Naive thymus-derived CD4-positive, alpha-beta T cell (primary cell): ENCODE measurements at regions of chr3 and their contacts with region 1.

Region 1: DNA sequence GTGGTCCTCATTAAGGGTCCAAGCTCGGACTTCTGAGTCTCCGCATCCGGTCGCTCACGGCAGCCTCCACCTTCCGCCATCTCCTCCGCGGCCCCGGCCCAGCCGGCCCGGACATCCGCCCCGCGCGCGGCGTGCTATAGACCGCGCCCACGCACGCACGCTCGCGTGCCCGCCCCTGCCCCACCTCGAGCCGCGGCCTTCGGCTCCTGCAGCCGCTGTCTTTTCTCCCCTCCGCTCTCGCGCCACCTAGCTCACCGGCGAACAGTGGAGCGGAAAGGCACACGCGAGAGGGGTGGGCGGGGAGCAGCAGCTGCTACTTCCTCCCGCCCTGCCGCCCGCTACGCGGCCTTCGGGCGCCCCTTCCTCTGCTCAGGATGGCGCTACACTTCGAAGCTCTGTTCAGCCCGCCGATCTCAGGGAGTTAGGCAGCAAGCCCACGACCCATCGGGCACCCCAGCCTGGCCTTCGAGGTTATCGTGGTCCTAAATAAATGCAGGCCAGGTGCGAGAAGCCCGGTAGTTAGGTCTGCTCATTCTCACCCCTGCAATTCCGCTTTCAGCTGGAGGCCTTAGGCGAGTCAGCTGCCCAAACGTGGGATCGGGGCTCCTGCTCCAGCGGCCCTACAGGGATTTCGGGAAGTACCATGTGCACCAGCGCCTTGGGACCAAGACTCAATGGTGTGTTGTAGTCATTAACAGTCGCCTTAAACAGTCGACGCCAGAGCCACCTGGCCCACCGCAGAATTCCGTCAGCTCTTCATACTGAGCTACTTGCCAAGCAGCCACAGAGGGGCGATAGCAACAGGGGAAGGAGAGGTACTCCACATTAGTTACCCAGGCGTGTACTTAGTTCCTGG is at the start of gene USP4:
- DNase-seq: peak; percentile 78 to 93 (median 91)
- ATAC-seq: peak; percentile 91
- H3K4me3 ChIP-seq: peak within 1 kb of the TSS; percentile 89
- H3K4me3 Mint-ChIP-seq: peak within 1 kb of the TSS; percentile 81 to 96 (median 86)
- H3K27ac ChIP-seq: peak within 1 kb of the TSS; percentile 95
- H3K27ac Mint-ChIP-seq: peak within 1 kb of the TSS; percentile 95 to 99 (median 98)
- H3K4me1 ChIP-seq: peaks cover 23 to 30% of the 10 kb centered on the region in 2 donors
- H3K4me1 Mint-ChIP-seq: peaks cover 32 to 61% (median 47%) of the 10 kb centered on the region in 7 donors
- H3K27me3 ChIP-seq: no peaks in the 10 kb centered on the region
- H3K27me3 Mint-ChIP-seq: no peaks in the 10 kb centered on the region
- total RNA-seq, gene USP4: 98.3 to 135 (median 109) TPM

Region 2: GRCh38 chr3:48716982-48717746 is 623.0 kb before region 1 on chr3 and contains the start of gene IP6K2:
- CTCF ChIA-PET with region 1: no interaction called
- POLR2A ChIA-PET with region 1: no interaction called
- intact Hi-C with region 1: loop called in 1 of 2 experiments (anchors 1 kb)
- DNase-seq: peak; percentile 92 to 99 (median 97)
- ATAC-seq: peak; percentile 100
- H3K4me3 ChIP-seq: peak within 1 kb of the TSS; percentile 99
- H3K4me3 Mint-ChIP-seq: peak within 1 kb of the TSS; percentile 94 to 99 (median 98)
- H3K27ac ChIP-seq: peak within 1 kb of the TSS; percentile 84
- H3K27ac Mint-ChIP-seq: peak within 1 kb of the TSS; percentile 83 to 99 (median 96)
- H3K4me1 ChIP-seq: peaks cover 23 to 29% of the 10 kb centered on the region in 2 donors
- H3K4me1 Mint-ChIP-seq: peaks cover 33 to 46% (median 39%) of the 10 kb centered on the region in 7 donors
- H3K27me3 ChIP-seq: no peaks in the 10 kb centered on the region
- H3K27me3 Mint-ChIP-seq: peaks cover 0 to 22% (median 0%) of the 10 kb centered on the region in 5 donors
- total RNA-seq, gene IP6K2: 72.0 to 94.3 (median 85.9) TPM

Region 3: GRCh38 chr3:49120438-49121131 is 219.6 kb before region 1 on chr3 and contains the start of gene USP19:
- CTCF ChIA-PET with region 1: no interaction called
- POLR2A ChIA-PET with region 1: interaction called, 14 read pairs
- intact Hi-C with region 1: loop called in 1 of 2 experiments (anchors 1 kb)
- DNase-seq: peak; percentile 92 to 96 (median 95)
- ATAC-seq: peak; percentile 96
- H3K4me3 ChIP-seq: peak within 1 kb of the TSS; percentile 70
- H3K4me3 Mint-ChIP-seq: peak within 1 kb of the TSS; percentile 80 to 97 (median 88)
- H3K27ac ChIP-seq: peak within 1 kb of the TSS; percentile 92
- H3K27ac Mint-ChIP-seq: peak within 1 kb of the TSS; percentile 83 to 96 (median 94)
- H3K4me1 ChIP-seq: peaks cover 17 to 27% of the 10 kb centered on the region in 2 donors
- H3K4me1 Mint-ChIP-seq: peaks cover 0 to 31% (median 25%) of the 10 kb centered on the region in 7 donors
- H3K27me3 ChIP-seq: no peaks in the 10 kb centered on the region
- H3K27me3 Mint-ChIP-seq: no peaks in the 10 kb centered on the region
- total RNA-seq, gene USP19: 60.0 to 106 (median 78.0) TPM

Region 4: DNA sequence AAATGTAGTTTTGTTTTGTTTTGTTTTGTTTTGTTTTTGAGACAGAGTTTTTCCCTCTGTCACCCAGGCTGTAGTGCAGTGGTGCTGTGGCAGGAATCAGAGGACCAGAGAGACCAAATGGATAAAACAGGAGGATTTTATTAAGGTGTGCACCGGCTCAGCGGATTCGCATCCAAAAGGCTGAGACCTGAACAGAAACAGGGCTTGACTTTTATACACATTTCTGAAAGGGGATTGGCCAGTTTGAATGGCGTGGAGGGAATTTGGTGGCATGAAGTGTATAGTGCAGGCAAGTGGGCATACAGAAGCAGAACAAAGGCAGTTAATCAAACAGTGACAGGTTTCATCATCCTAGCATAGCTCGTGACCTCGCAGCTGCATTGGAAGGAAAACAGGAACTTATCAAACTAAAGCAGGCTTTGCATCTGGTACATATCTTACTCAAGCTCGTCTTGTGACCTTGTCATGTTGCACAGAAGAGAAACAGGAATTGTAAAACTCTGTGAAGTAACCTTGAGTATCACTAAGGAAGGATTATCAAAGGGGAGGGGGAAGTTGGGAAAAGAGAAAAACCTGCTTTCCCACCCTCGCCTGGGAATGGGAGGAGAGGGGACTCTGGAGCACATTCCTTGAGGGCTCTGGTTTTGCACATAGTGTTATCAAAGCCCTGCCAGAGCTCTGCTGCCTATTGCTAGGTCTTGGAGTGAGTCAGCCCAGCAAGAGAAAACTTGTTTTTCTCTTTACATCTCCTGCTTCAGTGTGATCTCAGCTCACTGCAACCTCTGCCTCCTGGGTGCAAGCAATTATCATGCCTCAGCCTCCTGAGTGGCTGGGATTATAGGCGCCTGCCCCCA is 101.7 kb before region 1 on chr3:
- CTCF ChIA-PET with region 1: no interaction called
- POLR2A ChIA-PET with region 1: no interaction called
- intact Hi-C with region 1: no loop called
- DNase-seq: no peak
- ATAC-seq: peak; percentile 88
- H3K4me3 ChIP-seq: no peak overlapping the region
- H3K4me3 Mint-ChIP-seq: no peak overlapping the region
- H3K27ac ChIP-seq: no peak overlapping the region
- H3K27ac Mint-ChIP-seq: no peak overlapping the region
- H3K4me1 ChIP-seq: no peaks in the 10 kb centered on the region
- H3K4me1 Mint-ChIP-seq: no peaks in the 10 kb centered on the region
- H3K27me3 ChIP-seq: no peaks in the 10 kb centered on the region
- H3K27me3 Mint-ChIP-seq: peaks cover 0 to 11% (median 4%) of the 10 kb centered on the region in 5 donors

Region 5: DNA sequence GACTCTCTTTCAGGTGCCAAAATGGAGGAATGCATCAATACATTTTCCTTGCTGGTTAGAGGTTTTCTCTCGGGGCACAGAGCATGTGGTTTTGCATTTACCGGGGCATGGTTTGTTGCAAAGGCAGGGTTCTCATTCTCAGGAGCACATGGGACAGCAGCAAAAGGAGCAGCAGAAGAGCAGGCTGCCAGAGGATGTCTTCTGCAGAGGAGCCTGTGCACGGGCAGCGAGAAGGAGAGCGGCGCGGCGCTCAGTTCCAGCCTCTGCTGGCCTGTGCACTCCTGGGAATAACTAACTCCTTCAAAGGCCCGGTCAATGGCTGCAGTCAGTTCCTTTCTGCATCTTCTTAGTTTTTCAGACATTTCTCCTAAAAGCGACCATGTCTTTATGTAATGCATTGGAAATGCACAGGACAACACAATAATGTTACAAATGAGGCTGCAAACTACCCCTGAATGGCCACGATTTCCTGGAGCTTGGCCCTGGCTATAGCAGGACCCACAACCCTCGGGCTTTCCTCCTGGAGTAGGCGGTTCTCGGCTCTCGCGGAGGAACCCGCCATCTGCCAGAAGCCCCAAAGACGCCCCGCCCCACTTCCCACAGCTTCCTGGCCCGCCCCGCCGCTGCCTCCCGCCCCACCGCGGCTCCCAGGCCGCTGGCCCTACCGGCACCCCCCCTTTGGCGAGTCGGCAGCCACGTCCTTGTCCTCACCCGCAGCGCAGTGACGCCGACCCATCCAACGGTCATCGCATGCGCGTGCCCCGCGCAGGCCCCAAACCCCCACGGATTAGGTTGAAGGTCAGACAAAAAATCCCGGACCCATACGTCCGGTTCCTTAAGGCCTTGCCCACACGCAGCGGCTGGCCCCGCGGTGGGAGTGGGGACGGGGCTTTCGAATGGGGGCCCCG is 63.4 kb before region 1 on chr3 and contains the start of gene C3orf62:
- CTCF ChIA-PET with region 1: no interaction called
- POLR2A ChIA-PET with region 1: no interaction called
- intact Hi-C with region 1: loop called in 1 of 2 experiments (anchors 5 kb)
- DNase-seq: peak; percentile 41 to 85 (median 55)
- ATAC-seq: peak; percentile 91
- H3K4me3 ChIP-seq: peak within 1 kb of the TSS; percentile 77
- H3K4me3 Mint-ChIP-seq: peak within 1 kb of the TSS; percentile 80 to 91 (median 87)
- H3K27ac ChIP-seq: peak within 1 kb of the TSS; percentile 84
- H3K27ac Mint-ChIP-seq: peak within 1 kb of the TSS; percentile 81 to 94 (median 88)
- H3K4me1 ChIP-seq: peaks cover 10% of the 10 kb centered on the region in 2 donors
- H3K4me1 Mint-ChIP-seq: peaks cover 6 to 33% (median 27%) of the 10 kb centered on the region in 7 donors
- H3K27me3 ChIP-seq: no peaks in the 10 kb centered on the region
- H3K27me3 Mint-ChIP-seq: no peaks in the 10 kb centered on the region
- total RNA-seq, gene C3orf62: 8.6 to 14.5 (median 10.9) TPM

Region 6: GRCh38 chr3:49358217-49358883 is 18.2 kb after region 1 on chr3 and contains the start of gene GPX1:
- CTCF ChIA-PET with region 1: interaction called, 12 read pairs
- POLR2A ChIA-PET with region 1: interaction called, 80 read pairs
- intact Hi-C with region 1: loop called (anchors 1 kb)
- DNase-seq: peak; percentile 45 to 89 (median 57)
- ATAC-seq: peak; percentile 87
- H3K4me3 ChIP-seq: peak within 1 kb of the TSS; percentile 85
- H3K4me3 Mint-ChIP-seq: peak within 1 kb of the TSS; percentile 88 to 99 (median 92)
- H3K27ac ChIP-seq: peak within 1 kb of the TSS; percentile 81
- H3K27ac Mint-ChIP-seq: peak within 1 kb of the TSS; percentile 92 to 98 (median 95)
- H3K4me1 ChIP-seq: peaks cover 17% of the 10 kb centered on the region in 2 donors
- H3K4me1 Mint-ChIP-seq: peaks cover 14 to 43% (median 25%) of the 10 kb centered on the region in 7 donors
- H3K27me3 ChIP-seq: no peaks in the 10 kb centered on the region
- H3K27me3 Mint-ChIP-seq: no peaks in the 10 kb centered on the region
- total RNA-seq, gene GPX1: 56.9 to 201 (median 86.9) TPM

Region 7: DNA sequence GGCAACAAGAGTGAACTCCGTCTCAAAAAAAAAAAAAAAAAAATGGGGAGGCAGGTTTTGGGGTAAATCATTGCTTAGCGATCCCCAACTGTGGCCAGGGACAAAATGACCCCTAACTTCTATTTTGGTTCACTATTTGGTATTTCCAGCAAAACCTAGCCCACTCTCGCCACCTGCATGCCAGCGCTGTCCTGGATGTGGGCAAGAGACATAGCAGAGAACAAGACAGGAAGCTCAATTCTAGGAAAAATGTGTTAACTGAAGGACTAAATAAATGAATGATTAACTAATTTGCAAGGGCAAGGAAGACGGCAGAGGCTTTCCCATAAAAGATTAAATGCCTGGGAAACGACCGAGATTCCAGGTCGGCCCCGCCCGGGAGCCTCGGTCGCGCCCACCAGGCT is 88.5 kb after region 1 on chr3:
- CTCF ChIA-PET with region 1: interaction called, 8 read pairs
- POLR2A ChIA-PET with region 1: interaction called, 29 read pairs
- intact Hi-C with region 1: loop called (anchors 1 kb)
- DNase-seq: peak in 1 of 9 donors; percentile 13
- ATAC-seq: no peak
- H3K4me3 ChIP-seq: peak overlapping the region; percentile 84
- H3K4me3 Mint-ChIP-seq: peak overlapping the region; percentile 88 to 98 (median 94)
- H3K27ac ChIP-seq: peak overlapping the region; percentile 83
- H3K27ac Mint-ChIP-seq: peak overlapping the region; percentile 49 to 96 (median 94)
- H3K4me1 ChIP-seq: peaks cover 0 to 5% of the 10 kb centered on the region in 2 donors
- H3K4me1 Mint-ChIP-seq: peaks cover 17 to 37% (median 28%) of the 10 kb centered on the region in 7 donors
- H3K27me3 ChIP-seq: no peaks in the 10 kb centered on the region
- H3K27me3 Mint-ChIP-seq: no peaks in the 10 kb centered on the region

Region 8: DNA sequence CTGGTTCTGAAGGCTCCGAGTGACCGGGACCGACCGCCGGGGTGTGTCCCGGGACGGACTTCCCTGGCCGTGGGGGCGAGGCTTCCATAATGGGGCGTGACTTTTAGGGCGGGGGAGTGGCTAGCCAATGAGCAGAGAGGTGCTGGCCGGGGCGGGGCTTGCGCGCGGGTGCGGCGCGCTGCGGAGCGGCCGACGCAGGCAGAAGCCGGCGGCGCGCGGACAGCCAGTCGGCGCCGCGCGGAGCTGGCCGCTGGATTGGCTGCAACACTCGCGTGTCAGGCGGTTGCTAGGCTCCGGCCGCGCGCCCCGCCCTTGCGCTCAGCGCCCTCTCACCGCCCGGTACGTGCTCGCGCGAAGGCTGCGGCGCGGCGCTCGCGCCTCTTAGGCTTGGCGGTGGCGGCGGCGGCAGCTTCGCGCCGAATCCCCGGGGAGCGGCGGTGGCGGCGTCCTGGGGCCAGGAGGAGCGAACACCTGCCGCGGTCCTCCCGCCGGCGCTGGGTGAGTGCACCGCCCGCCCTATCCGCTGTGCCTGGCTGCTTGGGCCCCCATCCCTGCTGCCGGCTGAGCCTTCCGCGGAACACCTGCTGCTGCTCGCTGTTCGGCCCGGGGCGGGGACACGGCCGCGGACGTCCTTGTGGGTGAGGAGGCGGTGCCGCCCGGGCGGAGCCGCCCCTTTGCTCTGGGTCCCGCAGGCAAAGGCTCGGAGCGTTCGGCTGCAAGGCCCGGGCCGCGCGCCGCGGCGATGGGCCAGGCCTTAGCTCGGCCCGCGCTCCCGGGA is 130.0 kb after region 1 on chr3 and contains the start of gene DAG1:
- CTCF ChIA-PET with region 1: interaction called, 3 read pairs
- POLR2A ChIA-PET with region 1: interaction called, 33 read pairs
- intact Hi-C with region 1: loop called (anchors 1 kb)
- DNase-seq: peak; percentile 90 to 98 (median 95)
- ATAC-seq: peak; percentile 91
- H3K4me3 ChIP-seq: peak within 1 kb of the TSS; percentile 92
- H3K4me3 Mint-ChIP-seq: peak within 1 kb of the TSS; percentile 87 to 97 (median 92)
- H3K27ac ChIP-seq: peak within 1 kb of the TSS; percentile 94
- H3K27ac Mint-ChIP-seq: peak within 1 kb of the TSS; percentile 89 to 95 (median 93)
- H3K4me1 ChIP-seq: peaks cover 15 to 20% of the 10 kb centered on the region in 2 donors
- H3K4me1 Mint-ChIP-seq: peaks cover 14 to 27% (median 22%) of the 10 kb centered on the region in 7 donors
- H3K27me3 ChIP-seq: no peaks in the 10 kb centered on the region
- H3K27me3 Mint-ChIP-seq: no peaks in the 10 kb centered on the region
- total RNA-seq, gene DAG1: 12.0 to 22.3 (median 20.1) TPM